Activated CD4-positive, alpha-beta T cell treated with anti-CD3 and anti-CD28 coated beads, Interleukin-2, amount 10 ng/mL, durations not matched to agents 24 days and 14 days (primary cell): ENCODE measurements at regions of chr2 and their contacts with region 1.

Region 1: GRCh38 chr2:177332041-177332991 is 60.3 kb upstream of the AGPS start:
- DNase-seq: peak; percentile 88
- H3K4me3 Mint-ChIP-seq: no peak overlapping the region
- H3K27ac Mint-ChIP-seq: no peak overlapping the region
- H3K4me1 Mint-ChIP-seq: peaks cover 15% of the 10 kb centered on the region
- H3K27me3 Mint-ChIP-seq: no peaks in the 10 kb centered on the region

Region 2: DNA sequence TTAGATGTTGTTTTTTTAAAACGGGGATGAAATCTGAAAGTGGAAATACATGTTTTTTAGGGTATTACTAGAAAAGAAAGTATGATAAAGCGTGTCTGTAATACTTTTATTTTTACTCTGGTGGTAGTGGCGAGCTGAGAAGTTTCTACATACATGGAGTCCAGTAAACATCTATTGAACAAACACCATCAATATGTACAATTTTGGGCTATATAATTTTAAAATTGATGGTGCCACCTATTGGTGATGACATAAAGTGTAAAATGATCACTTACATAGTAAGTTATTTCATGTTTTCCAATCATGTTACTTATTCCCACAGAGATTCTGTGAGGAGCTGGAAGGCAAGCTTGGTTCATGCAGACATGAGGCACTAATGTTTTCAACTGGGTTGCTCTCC is 36.3 kb before region 1 on chr2:
- intact Hi-C with region 1: loop called (anchors 5 kb)
- DNase-seq: no peak
- H3K4me3 Mint-ChIP-seq: no peak overlapping the region
- H3K27ac Mint-ChIP-seq: no peak overlapping the region
- H3K4me1 Mint-ChIP-seq: peaks cover 34% of the 10 kb centered on the region
- H3K27me3 Mint-ChIP-seq: no peaks in the 10 kb centered on the region

Region 3: GRCh38 chr2:177572236-177572671 is 239.9 kb after region 1 on chr2:
- intact Hi-C with region 1: no loop called
- DNase-seq: no peak
- H3K4me3 Mint-ChIP-seq: no peak overlapping the region
- H3K27ac Mint-ChIP-seq: no peak overlapping the region
- H3K4me1 Mint-ChIP-seq: peaks cover 6% of the 10 kb centered on the region
- H3K27me3 Mint-ChIP-seq: peaks cover 4% of the 10 kb centered on the region

Region 4: GRCh38 chr2:177604271-177605065 is 272.2 kb after region 1 on chr2:
- intact Hi-C with region 1: loop called (anchors 1 kb)
- DNase-seq: no peak
- H3K4me3 Mint-ChIP-seq: no peak overlapping the region
- H3K27ac Mint-ChIP-seq: no peak overlapping the region
- H3K4me1 Mint-ChIP-seq: no peaks in the 10 kb centered on the region
- H3K27me3 Mint-ChIP-seq: peaks cover 4% of the 10 kb centered on the region

Region 5: GRCh38 chr2:177724398-177725287 is 392.3 kb after region 1 on chr2:
- intact Hi-C with region 1: loop called (anchors 1 kb)
- DNase-seq: peak; percentile 84
- H3K4me3 Mint-ChIP-seq: no peak overlapping the region
- H3K27ac Mint-ChIP-seq: no peak overlapping the region
- H3K4me1 Mint-ChIP-seq: peaks cover 2% of the 10 kb centered on the region
- H3K27me3 Mint-ChIP-seq: peaks cover 33% of the 10 kb centered on the region